GM18951 (cell line): ENCODE measurements at regions of chr12 and their contacts with region 1.

Region 1: GRCh38 chr12:79690638-79691493 is at the start of gene PAWR:
- POLR2A ChIP-seq: peak; percentile 43

Region 2: DNA sequence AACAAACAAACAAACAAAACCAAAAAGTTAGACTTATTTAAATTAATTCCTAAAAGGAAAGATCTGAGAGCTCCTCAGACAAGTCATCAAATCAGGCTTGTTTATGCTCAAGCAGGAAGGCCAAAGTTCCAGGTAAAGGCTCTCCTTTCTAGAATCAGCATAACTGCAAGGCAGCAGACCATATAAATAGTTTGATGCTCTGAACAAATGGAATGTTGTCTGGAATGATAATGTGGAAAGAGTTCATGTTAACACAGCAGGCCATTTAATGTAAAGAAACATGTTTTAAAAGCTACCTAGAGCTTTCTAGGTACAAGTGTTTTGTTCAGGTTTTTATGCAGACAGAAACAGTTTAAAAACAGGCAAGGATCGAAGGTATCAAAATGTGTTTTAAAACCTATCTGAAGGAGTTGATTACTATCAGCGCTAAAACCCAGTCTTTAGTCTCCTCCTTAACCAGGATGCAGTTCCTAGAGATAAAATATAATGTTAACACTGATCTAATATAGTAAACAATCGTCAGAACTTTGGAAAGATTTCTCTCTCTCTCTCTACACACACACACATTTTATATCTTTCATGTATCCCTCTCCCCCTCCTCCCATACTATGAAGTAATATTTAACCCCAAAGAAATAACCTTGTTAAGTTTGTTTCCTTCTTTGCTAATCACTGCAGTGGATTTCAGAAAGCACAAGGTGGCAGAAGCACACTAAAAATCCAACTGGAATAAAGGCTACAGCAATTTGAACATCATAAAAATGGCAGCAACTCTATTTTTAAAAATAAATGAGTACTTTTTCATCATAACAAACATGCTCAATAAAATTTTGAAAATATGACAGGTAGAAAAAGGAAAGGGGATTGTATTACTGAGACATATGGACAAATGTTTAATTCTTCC is 135.6 kb before region 1 on chr12:
- in situ Hi-C with region 1: loop called (anchors 25 kb)
- POLR2A ChIP-seq: no peak

Region 3: GRCh38 chr12:80053048-80053790 is 362.4 kb after region 1 on chr12:
- in situ Hi-C with region 1: no loop called
- POLR2A ChIP-seq: no peak